CD8-positive, alpha-beta T cell (primary cell): ENCODE measurements at regions of chr6 and their contacts with region 1.

Region 1: DNA sequence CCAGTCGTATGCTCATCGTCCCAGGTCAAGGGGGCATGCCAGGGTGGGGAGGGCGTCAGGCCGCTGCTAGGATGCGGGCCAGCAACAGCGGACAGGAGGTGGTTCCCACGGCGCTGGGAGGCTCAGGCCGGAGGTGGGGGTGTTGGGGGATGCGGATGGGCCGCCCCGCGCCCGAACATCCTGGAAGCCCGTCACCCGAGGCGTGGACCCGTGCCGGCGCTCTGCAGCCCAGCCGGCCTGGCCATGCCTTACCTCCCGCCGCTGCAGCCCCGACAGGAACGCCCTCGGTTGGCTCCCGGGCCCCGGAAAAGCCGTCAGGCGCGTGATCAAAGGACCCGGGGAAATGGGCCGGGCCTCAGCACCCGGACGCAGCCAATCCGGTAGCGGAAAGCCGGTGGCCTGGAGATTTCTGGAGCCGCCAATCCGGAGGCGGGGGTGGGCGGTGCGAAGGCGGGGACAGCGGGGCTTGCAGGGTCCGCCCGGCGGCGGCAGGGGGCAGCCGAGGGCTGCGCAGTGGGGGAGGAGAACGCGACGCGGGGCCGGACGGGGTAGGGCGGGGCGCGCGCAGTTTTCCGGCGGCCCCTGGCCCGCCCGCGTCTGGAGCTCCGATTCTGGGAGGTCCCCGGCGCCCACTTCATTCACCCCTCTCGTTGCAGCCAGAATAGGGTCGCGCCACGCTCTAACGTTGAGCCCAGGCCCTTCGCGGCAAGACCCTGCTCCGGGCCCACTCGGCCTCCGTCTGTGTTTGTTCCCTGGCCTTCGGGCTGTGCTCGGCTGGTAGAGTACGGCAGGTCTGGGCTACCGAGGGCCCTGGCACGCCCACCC is at the start of gene SMIM29:
- DNase-seq: peak; percentile 96 to 99 (median 97)
- ATAC-seq: peak; percentile 91
- H3K4me3 ChIP-seq: peak within 1 kb of the TSS; percentile 87 to 89
- H3K4me3 Mint-ChIP-seq: peak within 1 kb of the TSS; percentile 93
- H3K27ac ChIP-seq: peak within 1 kb of the TSS; percentile 46 to 91
- H3K27ac Mint-ChIP-seq: peak within 1 kb of the TSS; percentile 95
- H3K4me1 ChIP-seq: peaks cover 16% of the 10 kb centered on the region
- H3K4me1 Mint-ChIP-seq: peaks cover 33% of the 10 kb centered on the region
- H3K27me3 ChIP-seq: no peaks in the 10 kb centered on the region
- H3K27me3 Mint-ChIP-seq: no peaks in the 10 kb centered on the region
- CTCF ChIP-seq: peak; percentile 83
- total RNA-seq, gene SMIM29: 12.7 to 14.2 TPM

Region 2: DNA sequence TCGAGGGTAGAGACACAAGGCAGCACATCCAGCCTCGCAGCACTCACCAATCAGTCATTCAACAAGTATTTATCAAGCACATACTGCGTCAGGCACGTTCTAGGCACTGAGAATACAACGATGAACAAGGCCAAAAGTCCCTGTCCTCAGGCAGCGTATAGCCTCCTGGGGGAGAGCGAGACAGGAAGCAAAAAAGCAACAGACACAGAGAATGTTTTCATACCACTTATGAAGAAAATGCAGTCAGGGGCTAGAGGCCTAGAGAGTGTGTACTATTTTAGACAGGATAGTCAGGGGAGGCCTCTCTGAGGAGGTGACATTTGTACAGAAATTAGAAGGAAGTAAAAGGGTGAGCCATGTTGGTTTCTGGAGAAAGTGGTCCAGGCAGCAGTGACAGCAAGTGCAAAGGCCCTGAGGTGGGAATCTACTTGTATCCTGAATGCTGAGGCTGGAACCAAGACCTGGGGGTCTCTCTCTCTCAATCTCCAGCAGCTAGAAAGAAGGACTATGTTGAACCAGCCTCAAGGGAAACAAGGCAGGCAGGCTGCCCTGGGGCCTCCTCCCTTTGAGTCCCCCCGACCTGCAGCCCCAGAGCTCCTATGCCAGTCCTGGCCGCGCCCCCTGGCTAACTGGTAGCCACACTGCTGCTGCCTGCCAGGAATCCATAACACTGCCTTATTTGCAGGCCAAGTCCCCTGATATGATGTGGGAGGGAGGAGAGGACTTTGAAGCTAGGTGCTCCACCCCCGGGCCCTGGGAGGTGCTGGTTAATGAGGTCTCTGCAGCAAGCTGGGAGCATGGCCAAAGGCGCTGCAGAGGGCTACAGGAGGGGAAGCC is 254.2 kb before region 1 on chr6:
- CTCF ChIA-PET with region 1: no interaction called
- POLR2A ChIA-PET with region 1: no interaction called
- intact Hi-C with region 1: no loop called
- DNase-seq: no peak
- ATAC-seq: no peak
- H3K4me3 ChIP-seq: no peak overlapping the region
- H3K4me3 Mint-ChIP-seq: no peak overlapping the region
- H3K27ac ChIP-seq: no peak overlapping the region
- H3K27ac Mint-ChIP-seq: no peak overlapping the region
- H3K4me1 ChIP-seq: no peaks in the 10 kb centered on the region
- H3K4me1 Mint-ChIP-seq: no peaks in the 10 kb centered on the region
- H3K27me3 ChIP-seq: peaks cover 0 to 3% of the 10 kb centered on the region in 2 experiments
- H3K27me3 Mint-ChIP-seq: peaks cover 11% of the 10 kb centered on the region
- CTCF ChIP-seq: no peak

Region 3: GRCh38 chr6:34044945-34045595 is 203.9 kb before region 1 on chr6:
- CTCF ChIA-PET with region 1: no interaction called
- POLR2A ChIA-PET with region 1: no interaction called
- intact Hi-C with region 1: no loop called
- DNase-seq: peak in 8 of 9 experiments; percentile 12 to 71 (median 37)
- ATAC-seq: peak; percentile 89
- H3K4me3 ChIP-seq: no peak overlapping the region
- H3K4me3 Mint-ChIP-seq: no peak overlapping the region
- H3K27ac ChIP-seq: no peak overlapping the region
- H3K27ac Mint-ChIP-seq: peak overlapping the region; percentile 8
- H3K4me1 ChIP-seq: peaks cover 11% of the 10 kb centered on the region
- H3K4me1 Mint-ChIP-seq: peaks cover 16% of the 10 kb centered on the region
- H3K27me3 ChIP-seq: no peaks in the 10 kb centered on the region
- H3K27me3 Mint-ChIP-seq: peaks cover 9% of the 10 kb centered on the region
- CTCF ChIP-seq: no peak

Region 4: GRCh38 chr6:34132486-34133185 is 116.3 kb before region 1 on chr6:
- CTCF ChIA-PET with region 1: no interaction called
- POLR2A ChIA-PET with region 1: no interaction called
- intact Hi-C with region 1: no loop called
- DNase-seq: peak in 6 of 9 experiments; percentile 14 to 54 (median 42)
- ATAC-seq: no peak
- H3K4me3 ChIP-seq: no peak overlapping the region
- H3K4me3 Mint-ChIP-seq: no peak overlapping the region
- H3K27ac ChIP-seq: no peak overlapping the region
- H3K27ac Mint-ChIP-seq: no peak overlapping the region
- H3K4me1 ChIP-seq: no peaks in the 10 kb centered on the region
- H3K4me1 Mint-ChIP-seq: peaks cover 3% of the 10 kb centered on the region
- H3K27me3 ChIP-seq: peaks cover 8 to 11% of the 10 kb centered on the region in 2 experiments
- H3K27me3 Mint-ChIP-seq: peaks cover 52% of the 10 kb centered on the region
- CTCF ChIP-seq: no peak

Region 5: DNA sequence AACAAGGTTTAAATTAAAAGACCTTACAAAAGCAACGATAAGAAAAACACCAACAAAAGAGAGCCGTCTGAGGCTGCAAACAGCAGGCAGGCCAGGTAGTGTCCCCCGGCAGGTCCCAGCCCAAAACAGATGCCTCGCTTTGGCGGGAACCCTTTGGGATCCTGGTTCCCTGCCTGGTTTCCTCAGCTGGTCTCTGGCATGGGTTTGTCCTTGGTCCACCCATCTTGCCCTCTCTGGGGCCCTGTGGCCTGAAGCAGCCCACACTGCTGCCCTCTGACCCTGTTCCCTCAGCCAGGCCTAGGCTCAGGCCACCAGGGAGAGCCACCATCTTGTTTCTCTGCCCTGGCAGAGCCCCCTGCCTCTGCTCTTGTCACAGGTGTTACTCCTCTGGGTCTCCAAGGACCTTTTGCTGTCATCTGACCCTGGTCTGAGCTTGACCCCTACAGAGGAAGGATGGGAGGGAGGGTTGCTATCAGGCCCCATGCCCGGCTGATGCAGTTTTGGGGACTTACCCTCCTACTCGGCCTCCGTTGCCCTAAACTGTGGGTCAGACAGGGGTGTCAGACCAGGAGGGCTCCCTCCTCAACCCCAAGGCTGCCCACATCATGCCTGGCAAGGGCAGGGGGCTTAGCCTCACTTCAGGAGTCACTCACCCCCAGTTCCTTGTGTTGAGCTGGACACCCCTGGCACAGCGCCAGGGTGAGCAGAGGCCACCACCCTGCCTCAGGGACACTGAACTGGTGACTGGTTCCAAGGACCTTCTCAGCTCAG is 72.5 kb before region 1 on chr6:
- CTCF ChIA-PET with region 1: no interaction called
- POLR2A ChIA-PET with region 1: no interaction called
- intact Hi-C with region 1: no loop called
- DNase-seq: no peak
- ATAC-seq: no peak
- H3K4me3 ChIP-seq: no peak overlapping the region
- H3K4me3 Mint-ChIP-seq: no peak overlapping the region
- H3K27ac ChIP-seq: no peak overlapping the region
- H3K27ac Mint-ChIP-seq: no peak overlapping the region
- H3K4me1 ChIP-seq: no peaks in the 10 kb centered on the region
- H3K4me1 Mint-ChIP-seq: peaks cover 26% of the 10 kb centered on the region
- H3K27me3 ChIP-seq: peaks cover 0 to 2% of the 10 kb centered on the region in 2 experiments
- H3K27me3 Mint-ChIP-seq: no peaks in the 10 kb centered on the region
- CTCF ChIP-seq: no peak

Region 6: GRCh38 chr6:34196126-34196830 is 52.7 kb before region 1 on chr6:
- CTCF ChIA-PET with region 1: interaction called, 36 read pairs
- POLR2A ChIA-PET with region 1: interaction called, 3 read pairs
- intact Hi-C with region 1: loop called (anchors 1 to 2 kb)
- DNase-seq: peak; percentile 81 to 97 (median 90)
- ATAC-seq: peak; percentile 100
- H3K4me3 ChIP-seq: peak overlapping the region; percentile 67 to 89
- H3K4me3 Mint-ChIP-seq: peak overlapping the region; percentile 84
- H3K27ac ChIP-seq: peak overlapping the region in 1 of 2 experiments; percentile 32
- H3K27ac Mint-ChIP-seq: peak overlapping the region; percentile 32
- H3K4me1 ChIP-seq: peaks cover 10% of the 10 kb centered on the region
- H3K4me1 Mint-ChIP-seq: peaks cover 9% of the 10 kb centered on the region
- H3K27me3 ChIP-seq: no peaks in the 10 kb centered on the region
- H3K27me3 Mint-ChIP-seq: no peaks in the 10 kb centered on the region
- CTCF ChIP-seq: peak; percentile 85

Region 7: DNA sequence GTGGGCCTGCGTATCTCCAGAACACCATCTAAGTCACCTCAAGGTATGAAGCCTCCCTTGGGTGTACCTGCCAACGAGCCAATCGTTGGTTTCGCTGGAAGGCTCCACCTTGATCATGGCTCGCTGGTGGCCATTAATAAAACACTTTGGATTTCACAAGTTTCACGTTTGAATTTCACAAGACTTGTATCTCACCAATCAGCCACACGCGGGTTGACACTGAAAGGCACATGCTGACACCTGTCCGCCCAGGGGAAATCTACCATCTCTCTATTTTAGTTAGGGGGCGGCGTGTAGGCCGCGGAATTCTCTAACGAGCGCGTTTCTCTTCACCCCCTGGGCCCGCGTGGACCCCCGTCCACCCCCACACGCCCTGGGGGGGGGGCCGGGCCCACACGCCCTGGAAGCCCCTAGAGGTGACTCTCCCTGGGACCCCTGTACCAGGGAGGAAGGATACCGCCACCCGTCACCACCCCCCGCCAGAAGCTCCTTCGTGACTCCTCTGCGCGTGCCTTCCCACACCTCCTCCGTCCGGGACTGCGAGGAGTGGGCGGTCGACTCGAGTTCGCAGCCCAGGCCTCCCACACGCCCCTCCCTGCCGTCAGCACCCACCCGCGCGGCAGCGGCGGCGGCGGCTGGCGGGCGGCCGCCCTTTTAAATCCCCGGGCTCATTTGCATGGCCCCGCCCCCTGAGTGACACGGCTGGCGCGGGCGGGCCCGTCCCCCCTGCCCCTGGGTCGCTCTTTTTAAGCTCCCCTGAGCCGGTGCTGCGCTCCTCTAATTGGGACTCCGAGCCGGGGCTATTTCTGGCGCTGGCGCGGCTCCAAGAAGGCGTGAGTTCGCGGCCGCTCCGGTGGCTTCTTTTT is 12.6 kb before region 1 on chr6 and contains the start of gene HMGA1:
- CTCF ChIA-PET with region 1: interaction called, 3 read pairs
- POLR2A ChIA-PET with region 1: interaction called, 31 read pairs
- intact Hi-C with region 1: loop called (anchors 1 kb)
- DNase-seq: peak; percentile 75 to 95 (median 90)
- ATAC-seq: peak; percentile 70
- H3K4me3 ChIP-seq: peak within 1 kb of the TSS; percentile 77 to 90
- H3K4me3 Mint-ChIP-seq: peak within 1 kb of the TSS; percentile 90
- H3K27ac ChIP-seq: peak within 1 kb of the TSS; percentile 71 to 95
- H3K27ac Mint-ChIP-seq: peak within 1 kb of the TSS; percentile 99
- H3K4me1 ChIP-seq: peaks cover 22% of the 10 kb centered on the region
- H3K4me1 Mint-ChIP-seq: peaks cover 33% of the 10 kb centered on the region
- H3K27me3 ChIP-seq: no peaks in the 10 kb centered on the region
- H3K27me3 Mint-ChIP-seq: no peaks in the 10 kb centered on the region
- CTCF ChIP-seq: no peak
- total RNA-seq, gene HMGA1: 107 to 113 TPM

Region 8: GRCh38 chr6:34414999-34415858 is 166.3 kb after region 1 on chr6:
- CTCF ChIA-PET with region 1: interaction called, 83 read pairs
- POLR2A ChIA-PET with region 1: interaction called, 15 read pairs
- intact Hi-C with region 1: loop called (anchors 1 kb)
- DNase-seq: peak in 8 of 9 experiments; percentile 6 to 72 (median 42)
- ATAC-seq: peak; percentile 84
- H3K4me3 ChIP-seq: no peak overlapping the region
- H3K4me3 Mint-ChIP-seq: no peak overlapping the region
- H3K27ac ChIP-seq: no peak overlapping the region
- H3K27ac Mint-ChIP-seq: no peak overlapping the region
- H3K4me1 ChIP-seq: no peaks in the 10 kb centered on the region
- H3K4me1 Mint-ChIP-seq: peaks cover 15% of the 10 kb centered on the region
- H3K27me3 ChIP-seq: no peaks in the 10 kb centered on the region
- H3K27me3 Mint-ChIP-seq: no peaks in the 10 kb centered on the region
- CTCF ChIP-seq: peak; percentile 55

Region 9: DNA sequence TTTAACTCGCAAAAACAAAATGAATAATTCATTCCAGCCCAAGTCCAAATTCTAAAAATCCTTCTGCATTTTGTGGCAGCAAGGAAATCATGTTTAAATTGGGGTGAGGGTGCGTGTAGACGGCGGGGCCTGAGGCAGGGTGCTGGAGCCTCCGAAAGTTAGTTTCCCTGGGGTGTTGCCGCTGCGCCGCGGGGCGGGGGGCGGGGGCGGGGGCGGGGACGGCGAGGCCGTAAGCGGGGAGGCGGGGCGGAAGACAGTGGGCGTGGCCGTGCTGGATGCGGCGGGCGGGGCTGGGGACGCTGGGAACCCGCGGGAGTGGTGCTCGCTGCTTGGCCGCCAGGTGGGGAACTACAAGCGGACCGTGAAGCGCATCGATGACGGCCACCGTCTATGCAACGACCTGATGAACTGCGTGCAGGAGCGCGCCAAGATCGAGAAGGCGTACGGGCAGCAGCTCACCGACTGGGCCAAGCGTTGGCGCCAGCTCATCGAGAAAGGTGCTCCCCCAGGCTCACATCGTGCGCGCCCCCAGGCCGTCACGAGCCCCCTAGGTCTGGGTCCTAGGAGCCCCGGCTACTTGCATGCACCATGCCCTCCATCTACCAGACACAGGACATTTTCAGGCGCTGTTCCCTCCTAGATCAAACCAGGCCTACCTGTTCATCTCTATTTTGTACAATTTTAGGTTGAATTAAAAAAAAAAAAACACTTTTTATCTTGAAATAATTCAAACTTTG is 278.2 kb after region 1 on chr6:
- CTCF ChIA-PET with region 1: no interaction called
- POLR2A ChIA-PET with region 1: no interaction called
- intact Hi-C with region 1: loop called (anchors 1 to 5 kb)
- DNase-seq: peak; percentile 91 to 99 (median 96)
- ATAC-seq: peak; percentile 98
- H3K4me3 ChIP-seq: peak overlapping the region; percentile 17 to 31
- H3K4me3 Mint-ChIP-seq: peak overlapping the region; percentile 58
- H3K27ac ChIP-seq: peak overlapping the region; percentile 31 to 58
- H3K27ac Mint-ChIP-seq: peak overlapping the region; percentile 80
- H3K4me1 ChIP-seq: peaks cover 7% of the 10 kb centered on the region
- H3K4me1 Mint-ChIP-seq: peaks cover 14% of the 10 kb centered on the region
- H3K27me3 ChIP-seq: no peaks in the 10 kb centered on the region
- H3K27me3 Mint-ChIP-seq: no peaks in the 10 kb centered on the region
- CTCF ChIP-seq: peak; percentile 51

Region 10: GRCh38 chr6:34757687-34758274 is 508.8 kb after region 1 on chr6:
- CTCF ChIA-PET with region 1: no interaction called
- POLR2A ChIA-PET with region 1: no interaction called
- intact Hi-C with region 1: loop called (anchors 1 to 5 kb)
- DNase-seq: no peak
- ATAC-seq: no peak
- H3K4me3 ChIP-seq: peak overlapping the region; percentile 71 to 79
- H3K4me3 Mint-ChIP-seq: no peak overlapping the region
- H3K27ac ChIP-seq: peak overlapping the region; percentile 86 to 92
- H3K27ac Mint-ChIP-seq: no peak overlapping the region
- H3K4me1 ChIP-seq: peaks cover 18% of the 10 kb centered on the region
- H3K4me1 Mint-ChIP-seq: peaks cover 20% of the 10 kb centered on the region
- H3K27me3 ChIP-seq: no peaks in the 10 kb centered on the region
- H3K27me3 Mint-ChIP-seq: no peaks in the 10 kb centered on the region
- CTCF ChIP-seq: no peak